Gastrocnemius medialis (tissue), 4 donors: ENCODE measurements at regions of chr11 and their contacts with region 1.

Region 1: DNA sequence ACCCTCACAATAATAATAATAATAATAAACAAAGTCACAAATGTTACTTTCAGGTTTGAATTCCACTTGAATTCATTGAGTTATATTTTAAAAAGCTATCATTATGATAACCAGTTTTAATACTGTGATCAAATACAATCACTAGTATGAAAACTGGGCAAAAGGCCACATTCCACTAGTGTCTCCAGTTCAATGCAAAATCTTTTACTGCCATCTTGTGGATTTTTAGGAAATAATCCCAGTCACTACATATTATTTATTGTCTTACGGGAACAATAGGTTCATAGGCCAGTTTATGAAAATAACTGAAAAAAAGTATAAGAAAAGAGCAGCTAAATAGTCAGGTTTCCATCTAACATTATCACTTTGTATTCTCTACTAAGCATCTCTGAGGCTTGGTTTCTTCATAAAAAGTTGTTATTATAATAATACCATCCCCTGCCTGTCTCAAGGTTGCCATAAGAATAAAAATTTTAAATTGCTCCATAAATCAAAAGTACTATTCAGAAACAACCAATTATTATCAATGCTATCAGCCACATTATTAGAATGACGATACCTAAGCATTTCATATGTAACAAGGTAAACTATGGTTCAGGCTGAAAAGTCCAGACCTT is 533.9 kb upstream of the CCDC90B start:
- DNase-seq: no peak
- ATAC-seq: peak in 1 of 2 donors; percentile 64
- H3K4me3 ChIP-seq: no peak overlapping the region
- H3K27ac ChIP-seq: no peak overlapping the region
- H3K4me1 ChIP-seq: no peaks in the 10 kb centered on the region
- H3K27me3 ChIP-seq: no peaks in the 10 kb centered on the region
- CTCF ChIP-seq: peak in 4 of 5 experiments; percentile 31 to 51 (median 41)
- POLR2A ChIP-seq: no peak

Region 2: DNA sequence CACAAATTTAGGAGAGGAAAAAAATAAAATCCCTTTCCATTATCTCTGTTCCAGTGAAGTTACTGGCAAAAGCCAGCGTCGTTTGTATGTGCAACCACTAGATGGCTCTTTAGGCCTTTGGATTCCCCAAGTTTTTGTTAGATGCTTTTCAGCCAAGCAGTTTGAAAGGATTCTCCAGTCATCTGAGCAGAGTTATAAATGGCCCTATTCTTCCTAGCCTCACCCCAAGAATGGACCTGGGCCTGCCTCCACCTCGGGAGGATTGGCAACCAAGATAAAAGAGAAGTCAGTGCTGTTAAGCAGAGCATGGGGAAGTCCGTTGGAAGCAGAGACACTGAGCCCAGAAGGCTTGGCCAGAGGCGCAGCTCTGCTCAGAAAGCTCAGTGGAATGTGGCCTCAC is 1101.7 kb before region 1 on chr11:
- in situ Hi-C with region 1: loop called in 3 of 4 experiments (anchors 10 to 25 kb)
- intact Hi-C with region 1: loop called (anchors 5 kb)
- DNase-seq: no peak
- ATAC-seq: peak; percentile 61 to 75
- H3K4me3 ChIP-seq: no peak overlapping the region
- H3K27ac ChIP-seq: no peak overlapping the region
- H3K4me1 ChIP-seq: no peaks in the 10 kb centered on the region
- H3K27me3 ChIP-seq: no peaks in the 10 kb centered on the region
- CTCF ChIP-seq: peak; percentile 24 to 71 (median 54)
- POLR2A ChIP-seq: no peak

Region 3: GRCh38 chr11:83241291-83241946 is 578.6 kb before region 1 on chr11:
- in situ Hi-C with region 1: no loop called
- intact Hi-C with region 1: loop called (anchors 5 kb)
- DNase-seq: peak in 1 of 2 donors; percentile 18
- ATAC-seq: peak; percentile 54 to 78
- H3K4me3 ChIP-seq: no peak overlapping the region
- H3K27ac ChIP-seq: no peak overlapping the region
- H3K4me1 ChIP-seq: no peaks in the 10 kb centered on the region
- H3K27me3 ChIP-seq: no peaks in the 10 kb centered on the region
- CTCF ChIP-seq: peak in 3 of 5 experiments; percentile 14 to 43 (median 41)
- POLR2A ChIP-seq: no peak

Region 4: DNA sequence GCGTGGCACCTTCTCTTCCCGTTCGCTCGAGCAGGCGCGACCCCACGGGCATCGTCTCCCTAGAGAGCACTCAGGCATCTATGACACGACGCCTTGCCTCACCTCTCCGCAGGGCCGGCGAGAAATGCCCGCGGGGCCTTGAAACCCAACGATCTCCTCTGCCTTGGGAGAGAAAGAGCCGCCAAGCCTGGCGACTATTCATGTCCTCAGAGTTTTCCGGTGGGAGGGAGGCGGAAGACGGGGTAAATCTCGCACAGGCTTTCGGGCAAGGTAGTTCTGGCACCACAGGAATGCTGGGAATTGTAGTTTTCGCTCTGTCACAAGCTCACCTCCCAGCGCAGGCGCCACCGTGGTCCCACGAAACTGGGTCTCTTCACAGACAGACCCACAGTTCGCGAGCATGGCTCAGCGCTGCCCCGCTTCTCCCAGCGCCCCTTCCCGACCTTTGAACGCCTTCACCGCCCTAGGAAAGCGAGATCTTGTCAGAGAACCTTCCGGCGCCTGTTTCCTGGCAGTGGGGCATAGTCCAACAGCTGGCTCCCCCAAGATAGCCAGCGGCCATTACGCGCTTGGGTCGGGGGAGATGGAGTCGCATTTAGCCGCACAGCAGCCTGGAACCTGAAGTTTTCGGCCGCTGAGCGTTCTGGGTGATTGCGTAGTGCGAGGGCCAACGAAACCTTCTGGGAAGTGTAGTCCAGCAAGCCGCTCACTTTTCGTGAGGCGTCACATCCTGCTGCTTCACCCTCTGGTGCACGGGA is 534.1 kb before region 1 on chr11 and contains the start of gene CCDC90B:
- in situ Hi-C with region 1: loop called in 1 of 4 experiments (anchors 25 kb)
- intact Hi-C with region 1: loop called (anchors 5 kb)
- DNase-seq: peak; percentile 96 to 97
- ATAC-seq: peak; percentile 97 to 98
- H3K4me3 ChIP-seq: peak within 1 kb of the TSS; percentile 80 to 94 (median 90)
- H3K27ac ChIP-seq: peak within 1 kb of the TSS; percentile 95 to 98 (median 97)
- H3K4me1 ChIP-seq: peaks cover 36 to 37% of the 10 kb centered on the region in 2 donors
- H3K27me3 ChIP-seq: no peaks in the 10 kb centered on the region
- CTCF ChIP-seq: peak in 1 of 5 experiments; percentile 7
- POLR2A ChIP-seq: peak; percentile 83 to 88
- total RNA-seq, gene CCDC90B: 18.1 to 30.1 (median 22.8) TPM

Region 5: GRCh38 chr11:83292709-83293456 is 527.2 kb before region 1 on chr11:
- in situ Hi-C with region 1: loop called in 1 of 4 experiments (anchors 25 kb)
- intact Hi-C with region 1: loop called (anchors 5 kb)
- DNase-seq: no peak
- ATAC-seq: peak in 1 of 2 donors; percentile 72
- H3K4me3 ChIP-seq: peak overlapping the region in 2 of 4 donors; percentile 16 to 27
- H3K27ac ChIP-seq: no peak overlapping the region
- H3K4me1 ChIP-seq: no peaks in the 10 kb centered on the region
- H3K27me3 ChIP-seq: no peaks in the 10 kb centered on the region
- CTCF ChIP-seq: peak; percentile 26 to 60 (median 43)
- POLR2A ChIP-seq: no peak

Region 6: DNA sequence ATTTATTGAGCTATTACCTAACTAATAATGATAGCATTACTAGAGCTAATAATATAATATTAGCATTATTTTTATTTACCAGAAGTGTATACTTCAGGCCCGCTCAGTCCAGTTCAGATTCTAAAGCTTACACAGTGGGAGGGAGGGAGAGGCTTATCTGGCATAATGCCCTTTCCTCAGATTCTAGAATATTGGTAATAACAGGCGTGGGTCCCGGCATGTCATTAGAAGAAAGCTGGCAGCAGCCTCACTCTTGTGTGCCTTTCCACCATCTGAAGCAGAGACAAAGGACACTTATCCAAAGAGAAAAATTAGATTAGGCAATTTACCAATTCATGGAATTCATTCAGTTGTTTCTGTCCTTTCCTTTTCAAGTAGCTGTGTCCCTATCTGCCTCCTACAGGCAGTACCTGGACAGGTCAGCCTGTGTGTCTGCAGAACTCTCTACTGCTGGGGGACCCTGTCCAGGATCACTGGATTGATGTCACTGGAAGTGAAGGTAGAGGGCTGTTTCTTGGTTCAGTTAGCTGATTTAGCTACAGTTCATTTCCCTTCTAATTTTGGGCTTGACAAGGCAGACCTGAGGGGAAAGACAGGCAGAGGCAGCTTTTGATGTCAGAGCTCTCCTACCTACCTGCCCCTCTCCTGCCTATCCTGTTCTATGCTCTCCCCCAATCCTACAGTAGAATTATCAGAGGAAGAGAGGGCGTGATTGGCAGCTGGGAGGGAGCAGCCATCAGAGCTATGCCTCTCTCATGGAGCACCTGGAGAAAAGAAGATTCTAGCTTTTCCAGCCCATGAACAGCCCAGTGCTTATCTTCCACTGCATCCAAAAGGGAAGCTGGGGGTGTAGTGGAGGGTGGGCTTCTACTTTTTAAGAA is 513.6 kb before region 1 on chr11:
- in situ Hi-C with region 1: loop called in 2 of 4 experiments (anchors 10 to 25 kb)
- intact Hi-C with region 1: no loop called
- DNase-seq: no peak
- ATAC-seq: no peak
- H3K4me3 ChIP-seq: no peak overlapping the region
- H3K27ac ChIP-seq: no peak overlapping the region
- H3K4me1 ChIP-seq: no peaks in the 10 kb centered on the region
- H3K27me3 ChIP-seq: no peaks in the 10 kb centered on the region
- CTCF ChIP-seq: no peak
- POLR2A ChIP-seq: no peak